IMR-90 (cell line): ENCODE measurements at regions of chr11 and their contacts with region 1.

Region 1: DNA sequence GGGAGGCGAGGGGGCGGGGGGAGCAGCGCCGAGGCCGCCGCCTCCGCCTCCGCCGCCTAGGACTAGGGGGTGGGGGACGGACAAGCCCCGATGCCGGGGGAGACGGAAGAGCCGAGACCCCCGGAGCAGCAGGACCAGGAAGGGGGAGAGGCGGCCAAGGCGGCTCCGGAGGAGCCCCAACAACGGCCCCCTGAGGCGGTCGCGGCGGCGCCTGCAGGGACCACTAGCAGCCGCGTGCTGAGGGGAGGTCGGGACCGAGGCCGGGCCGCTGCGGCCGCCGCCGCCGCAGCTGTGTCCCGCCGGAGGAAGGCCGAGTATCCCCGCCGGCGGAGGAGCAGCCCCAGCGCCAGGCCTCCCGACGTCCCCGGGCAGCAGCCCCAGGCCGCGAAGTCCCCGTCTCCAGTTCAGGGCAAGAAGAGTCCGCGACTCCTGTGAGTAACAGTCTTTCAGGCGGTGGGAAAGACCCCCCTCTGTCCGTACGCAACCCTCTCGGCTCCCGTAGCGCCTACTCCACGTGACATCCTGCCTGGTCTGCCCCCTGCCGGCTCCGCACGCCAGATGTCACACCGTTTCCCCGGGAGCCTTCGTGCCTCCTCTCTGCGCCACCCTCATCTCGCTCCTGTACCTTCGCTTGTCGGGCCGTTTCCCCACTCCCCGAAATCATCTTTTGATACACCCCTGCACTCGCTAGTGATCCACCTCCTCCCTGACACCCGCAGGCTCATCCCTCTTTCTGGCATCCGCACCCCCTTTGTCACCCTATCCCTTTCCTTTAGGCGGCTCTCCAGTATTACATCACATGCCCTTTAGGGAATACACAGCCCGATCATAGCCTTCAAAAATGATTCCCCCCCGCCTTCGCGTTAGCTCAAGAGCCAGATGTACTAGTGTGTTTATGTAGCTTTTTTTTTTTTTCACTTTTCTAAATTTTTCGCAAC is 598 bp downstream of the ZFP91 start:
- DNase-seq: peak; percentile 91
- ATAC-seq: peak; percentile 24
- H3K4me3 ChIP-seq: peak overlapping the region; percentile 74
- H3K27ac ChIP-seq: peak overlapping the region; percentile 83
- H3K4me1 ChIP-seq: peaks cover 8% of the 10 kb centered on the region
- H3K27me3 ChIP-seq: no peaks in the 10 kb centered on the region
- CTCF ChIP-seq: peak; percentile 84
- POLR2A ChIP-seq: peak; percentile 77
- RAD21 ChIP-seq: peak; percentile 34

Region 2: GRCh38 chr11:57277845-57278709 is 1301.4 kb before region 1 on chr11:
- CTCF ChIA-PET with region 1: no interaction called
- POLR2A ChIA-PET with region 1: no interaction called
- dilution Hi-C with region 1: no loop called
- in situ Hi-C with region 1: no loop called
- intact Hi-C with region 1: no loop called
- DNase-seq: peak; percentile 84
- ATAC-seq: peak; percentile 89
- H3K4me3 ChIP-seq: peak overlapping the region; percentile 13; the same call in 1 of the 2 replicates
- H3K27ac ChIP-seq: peak overlapping the region; percentile 84
- H3K4me1 ChIP-seq: peaks cover 29% of the 10 kb centered on the region
- H3K27me3 ChIP-seq: no peaks in the 10 kb centered on the region
- CTCF ChIP-seq: peak; percentile 90
- POLR2A ChIP-seq: no peak
- RAD21 ChIP-seq: peak; percentile 76

Region 3: GRCh38 chr11:57680552-57680874 is 898.9 kb before region 1 on chr11:
- CTCF ChIA-PET with region 1: no interaction called
- POLR2A ChIA-PET with region 1: interaction called, 12 read pairs
- dilution Hi-C with region 1: no loop called
- in situ Hi-C with region 1: no loop called
- intact Hi-C with region 1: no loop called
- DNase-seq: peak; percentile 22
- ATAC-seq: peak; percentile 41
- H3K4me3 ChIP-seq: no peak overlapping the region
- H3K27ac ChIP-seq: no peak overlapping the region
- H3K4me1 ChIP-seq: peaks cover 4% of the 10 kb centered on the region
- H3K27me3 ChIP-seq: no peaks in the 10 kb centered on the region
- CTCF ChIP-seq: no peak
- POLR2A ChIP-seq: no peak
- RAD21 ChIP-seq: no peak

Region 4: DNA sequence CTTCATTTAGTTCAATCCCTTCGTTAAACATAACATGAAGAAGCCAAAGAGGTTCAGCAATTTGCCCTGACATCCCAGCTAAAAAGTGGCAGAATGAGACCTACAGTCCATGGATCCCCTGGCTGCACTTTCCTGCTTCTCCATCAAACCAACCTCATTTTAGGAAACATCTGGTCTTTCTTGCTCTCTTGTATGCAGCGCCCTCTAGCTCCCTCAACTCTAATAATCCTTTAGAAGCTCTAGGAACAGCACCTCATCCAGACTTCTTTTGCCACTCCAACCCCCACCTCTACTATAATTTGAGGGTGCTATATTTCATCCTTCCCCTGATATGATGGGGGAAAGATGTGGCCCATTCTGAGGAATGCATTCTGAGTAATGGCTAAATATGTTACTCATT is 50.4 kb after region 1 on chr11:
- CTCF ChIA-PET with region 1: interaction called, 25 read pairs
- POLR2A ChIA-PET with region 1: interaction called, 5 read pairs
- dilution Hi-C with region 1: no loop called
- in situ Hi-C with region 1: loop called (anchors 5 kb)
- intact Hi-C with region 1: loop called (anchors 1 kb)
- DNase-seq: peak; percentile 71
- ATAC-seq: peak; percentile 24; the same call in 1 of the 2 replicates
- H3K4me3 ChIP-seq: no peak overlapping the region
- H3K27ac ChIP-seq: no peak overlapping the region
- H3K4me1 ChIP-seq: peaks cover 18% of the 10 kb centered on the region
- H3K27me3 ChIP-seq: no peaks in the 10 kb centered on the region
- CTCF ChIP-seq: peak; percentile 78
- POLR2A ChIP-seq: no peak
- RAD21 ChIP-seq: peak; percentile 64

Region 5: GRCh38 chr11:58788355-58789023 is 209.0 kb after region 1 on chr11:
- CTCF ChIA-PET with region 1: interaction called, 4 read pairs
- POLR2A ChIA-PET with region 1: no interaction called
- dilution Hi-C with region 1: no loop called
- in situ Hi-C with region 1: no loop called
- intact Hi-C with region 1: loop called (anchors 2 kb)
- DNase-seq: peak; percentile 61
- ATAC-seq: peak; percentile 98
- H3K4me3 ChIP-seq: no peak overlapping the region
- H3K27ac ChIP-seq: no peak overlapping the region
- H3K4me1 ChIP-seq: no peaks in the 10 kb centered on the region
- H3K27me3 ChIP-seq: no peaks in the 10 kb centered on the region; the same call in 1 of the 2 replicates
- CTCF ChIP-seq: peak; percentile 68
- POLR2A ChIP-seq: no peak
- RAD21 ChIP-seq: peak; percentile 62

Region 6: DNA sequence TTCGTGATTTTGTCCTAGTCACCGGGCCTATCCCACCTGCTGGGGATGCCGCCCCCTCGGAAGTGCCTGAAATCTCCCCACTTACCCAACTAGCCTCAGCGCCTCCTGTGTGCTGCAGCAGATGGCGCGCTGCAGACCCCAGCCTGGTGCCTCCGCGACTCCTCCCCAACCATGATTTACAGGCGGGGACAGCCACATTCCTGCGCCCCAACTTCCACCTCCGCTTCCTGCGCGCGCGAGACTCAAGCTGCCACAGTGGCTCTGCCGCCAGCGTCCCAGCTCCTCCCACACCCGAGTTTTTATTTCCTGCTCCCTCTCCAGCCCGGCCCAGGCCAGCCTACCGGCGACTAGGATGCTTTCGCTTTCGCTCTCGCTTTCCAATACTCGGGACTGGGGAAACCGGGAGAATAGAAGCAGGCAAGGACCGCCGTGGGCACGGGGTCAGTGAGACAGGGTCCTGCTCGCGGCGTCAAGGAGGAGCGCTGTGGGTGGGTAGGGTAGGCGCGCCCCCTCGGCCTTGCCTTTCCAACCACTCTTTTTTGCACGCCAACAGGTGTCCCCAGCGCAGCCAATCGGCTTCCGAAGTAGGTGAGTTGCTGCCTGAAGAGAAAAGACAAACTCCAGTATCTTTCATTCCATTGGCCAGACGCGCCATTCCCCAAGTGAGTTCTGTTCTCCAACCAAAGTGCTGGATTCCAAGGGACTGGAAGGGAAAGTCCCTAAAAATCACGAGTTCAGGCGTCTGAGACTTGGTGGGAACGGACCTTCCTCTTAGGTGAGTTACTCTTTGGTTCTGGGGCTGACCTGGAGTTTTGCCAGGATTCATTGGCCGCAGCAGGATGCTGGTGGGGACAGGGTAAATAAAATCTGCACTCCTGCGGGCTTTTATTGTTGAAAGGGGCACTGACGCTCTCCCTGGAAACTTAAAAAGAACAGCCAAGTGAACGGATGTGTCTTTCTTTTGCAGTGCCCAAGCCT is 563.4 kb after region 1 on chr11 and contains the start of gene FAM111A:
- CTCF ChIA-PET with region 1: no interaction called
- POLR2A ChIA-PET with region 1: no interaction called
- dilution Hi-C with region 1: no loop called
- in situ Hi-C with region 1: no loop called
- intact Hi-C with region 1: loop called (anchors 5 kb)
- DNase-seq: peak; percentile 86
- ATAC-seq: peak; percentile 90
- H3K4me3 ChIP-seq: peak within 1 kb of the TSS; percentile 82
- H3K27ac ChIP-seq: peak within 1 kb of the TSS; percentile 82
- H3K4me1 ChIP-seq: peaks cover 6% of the 10 kb centered on the region
- H3K27me3 ChIP-seq: no peaks in the 10 kb centered on the region
- CTCF ChIP-seq: peak; percentile 38
- POLR2A ChIP-seq: no peak
- RAD21 ChIP-seq: 0 out of 2 replicates have a peak, but pooled peaks have one; percentile 7
- total RNA-seq, gene FAM111A: 36.4 and 46.1 TPM in 2 replicates